CD4-positive, alpha-beta T cell (primary cell): ENCODE measurements at regions of chr22 and their contacts with region 1.

Region 1: GRCh38 chr22:19109198-19110067 is 12.8 kb downstream of the DGCR2 start:
- DNase-seq: peak; percentile 28 to 88 (median 52)
- ATAC-seq: peak; percentile 84
- H3K4me3 ChIP-seq: peak overlapping the region; percentile 40
- H3K4me3 Mint-ChIP-seq: peak overlapping the region; percentile 84
- H3K27ac ChIP-seq: peak overlapping the region; percentile 85 to 90
- H3K27ac Mint-ChIP-seq: peak overlapping the region; percentile 86
- H3K4me1 ChIP-seq: peaks cover 62% of the 10 kb centered on the region
- H3K4me1 Mint-ChIP-seq: peaks cover 75% of the 10 kb centered on the region
- H3K27me3 ChIP-seq: no peaks in the 10 kb centered on the region
- H3K27me3 Mint-ChIP-seq: no peaks in the 10 kb centered on the region
- CTCF ChIP-seq: no peak

Region 2: DNA sequence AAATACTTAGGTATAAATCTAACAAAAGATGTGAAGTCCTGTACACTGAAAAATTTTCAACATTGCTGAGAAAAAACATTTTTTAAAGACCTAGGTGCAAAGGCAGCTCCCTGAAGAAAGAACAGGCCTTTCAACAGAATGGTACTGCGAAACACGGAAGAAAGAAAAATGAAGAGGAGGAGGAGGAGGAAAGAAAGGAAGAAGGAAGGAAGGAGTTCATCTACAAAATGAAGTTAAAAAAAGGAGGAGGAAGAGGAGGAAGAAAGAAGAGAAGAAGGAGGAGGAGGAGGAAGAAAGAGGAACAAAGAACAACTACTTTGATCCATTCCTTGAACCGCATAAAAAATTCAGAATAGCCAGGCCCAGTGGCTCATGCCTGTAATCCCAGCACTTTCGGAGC is 16.7 kb before region 1 on chr22:
- CTCF ChIA-PET with region 1: interaction called, 4 read pairs
- POLR2A ChIA-PET with region 1: no interaction called
- intact Hi-C with region 1: loop called in 1 of 2 experiments (anchors 2 kb)
- DNase-seq: no peak
- ATAC-seq: no peak
- H3K4me3 ChIP-seq: no peak overlapping the region
- H3K4me3 Mint-ChIP-seq: no peak overlapping the region
- H3K27ac ChIP-seq: no peak overlapping the region
- H3K27ac Mint-ChIP-seq: peak overlapping the region; percentile 19
- H3K4me1 ChIP-seq: peaks cover 4% of the 10 kb centered on the region
- H3K4me1 Mint-ChIP-seq: peaks cover 20% of the 10 kb centered on the region
- H3K27me3 ChIP-seq: no peaks in the 10 kb centered on the region
- H3K27me3 Mint-ChIP-seq: no peaks in the 10 kb centered on the region
- CTCF ChIP-seq: no peak

Region 3: GRCh38 chr22:19122143-19122751 is 12.8 kb after region 1 on chr22 and contains the start of gene DGCR2:
- CTCF ChIA-PET with region 1: interaction called, 19 read pairs
- POLR2A ChIA-PET with region 1: interaction called, 79 read pairs
- intact Hi-C with region 1: loop called (anchors 1 kb)
- DNase-seq: peak; percentile 95 to 99 (median 96)
- ATAC-seq: peak; percentile 97
- H3K4me3 ChIP-seq: peak within 1 kb of the TSS; percentile 95
- H3K4me3 Mint-ChIP-seq: peak within 1 kb of the TSS; percentile 94
- H3K27ac ChIP-seq: peak within 1 kb of the TSS in 1 of 2 donors; percentile 73
- H3K27ac Mint-ChIP-seq: peak within 1 kb of the TSS; percentile 87
- H3K4me1 ChIP-seq: peaks cover 52% of the 10 kb centered on the region
- H3K4me1 Mint-ChIP-seq: peaks cover 52% of the 10 kb centered on the region
- H3K27me3 ChIP-seq: no peaks in the 10 kb centered on the region
- H3K27me3 Mint-ChIP-seq: no peaks in the 10 kb centered on the region
- CTCF ChIP-seq: no peak
- total RNA-seq, gene DGCR2: 31.9 to 35.5 TPM

Region 4: GRCh38 chr22:19137384-19138216 is 28.2 kb after region 1 on chr22:
- CTCF ChIA-PET with region 1: no interaction called
- POLR2A ChIA-PET with region 1: no interaction called
- intact Hi-C with region 1: no loop called
- DNase-seq: no peak
- ATAC-seq: no peak
- H3K4me3 ChIP-seq: no peak overlapping the region
- H3K4me3 Mint-ChIP-seq: no peak overlapping the region
- H3K27ac ChIP-seq: no peak overlapping the region
- H3K27ac Mint-ChIP-seq: no peak overlapping the region
- H3K4me1 ChIP-seq: peaks cover 3% of the 10 kb centered on the region
- H3K4me1 Mint-ChIP-seq: peaks cover 4% of the 10 kb centered on the region
- H3K27me3 ChIP-seq: no peaks in the 10 kb centered on the region
- H3K27me3 Mint-ChIP-seq: no peaks in the 10 kb centered on the region
- CTCF ChIP-seq: no peak

Region 5: GRCh38 chr22:19447388-19448075 is 338.1 kb after region 1 on chr22 and contains the start of gene C22orf39:
- CTCF ChIA-PET with region 1: no interaction called
- POLR2A ChIA-PET with region 1: no interaction called
- intact Hi-C with region 1: loop called in 1 of 2 experiments (anchors 10 kb)
- DNase-seq: peak; percentile 75 to 96 (median 85)
- ATAC-seq: peak; percentile 92
- H3K4me3 ChIP-seq: peak within 1 kb of the TSS; percentile 88
- H3K4me3 Mint-ChIP-seq: peak within 1 kb of the TSS; percentile 93
- H3K27ac ChIP-seq: peak within 1 kb of the TSS; percentile 82 to 85
- H3K27ac Mint-ChIP-seq: peak within 1 kb of the TSS; percentile 91
- H3K4me1 ChIP-seq: peaks cover 38% of the 10 kb centered on the region
- H3K4me1 Mint-ChIP-seq: peaks cover 52% of the 10 kb centered on the region
- H3K27me3 ChIP-seq: no peaks in the 10 kb centered on the region
- H3K27me3 Mint-ChIP-seq: no peaks in the 10 kb centered on the region
- CTCF ChIP-seq: no peak
- total RNA-seq, gene C22orf39: 30.2 to 32.6 TPM